AG04449 (cell line): ENCODE measurements at regions of chr11 and their contacts with region 1.

Region 1: DNA sequence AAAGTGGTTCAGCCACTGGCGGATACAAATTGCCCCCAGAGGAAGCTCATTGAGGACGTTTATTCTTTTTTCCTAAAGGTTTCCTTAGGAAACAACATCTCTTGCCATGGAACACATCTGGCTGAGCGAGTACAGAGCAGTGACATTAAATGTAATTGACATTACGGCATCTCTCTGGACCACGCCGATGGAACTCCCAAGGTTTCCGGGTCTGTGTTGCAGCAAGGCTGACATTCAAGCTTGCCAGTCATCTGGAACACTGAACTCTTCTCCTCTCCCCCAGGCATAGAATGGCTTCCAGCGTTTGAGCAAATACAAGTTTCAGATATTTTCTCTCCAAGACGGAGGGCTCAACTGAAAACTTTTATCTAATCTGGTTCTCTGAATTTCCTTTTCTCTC is 42.1 kb downstream of the CLMP start:
- DNase-seq: no peak
- H3K4me3 ChIP-seq: no peak overlapping the region
- CTCF ChIP-seq: no peak

Region 2: DNA sequence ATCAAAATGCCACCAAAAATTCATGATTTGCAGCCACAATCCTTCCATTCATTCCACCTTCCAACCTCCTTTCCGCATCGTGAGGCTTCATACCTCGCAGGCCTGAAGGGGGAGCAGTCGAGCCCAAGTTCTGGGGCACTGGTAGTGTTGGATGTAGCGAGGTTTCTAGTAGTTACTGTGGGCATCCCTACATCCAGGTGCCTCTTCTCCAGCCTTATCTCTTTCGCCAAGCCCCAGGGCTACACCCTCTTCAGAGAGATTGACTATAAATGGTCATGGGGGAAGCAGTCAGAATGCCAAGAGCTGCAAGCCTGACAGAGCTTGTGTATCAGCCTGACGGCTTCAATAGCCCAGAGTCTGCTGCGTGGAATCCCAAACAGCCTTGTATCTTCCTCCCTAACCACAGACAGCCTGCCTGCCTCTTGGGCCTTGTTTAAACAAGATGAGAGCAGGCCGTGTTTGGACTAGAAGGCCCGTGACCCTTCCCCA is 13.2 kb after region 1 on chr11:
- CTCF ChIA-PET with region 1: interaction called, 83 read pairs
- POLR2A ChIA-PET with region 1: no interaction called
- DNase-seq: peak; percentile 75
- H3K4me3 ChIP-seq: no peak overlapping the region
- CTCF ChIP-seq: peak; percentile 75